Activated T-helper 2 cell treated with anti-CD3 and anti-CD28 coated beads, Interferon-gamma antibody, Interleukin-2, Interleukin-4, amounts not matched to agents 10 μg/mL and 5 μg/mL and 100 μg/mL, durations not matched to agents 14 hours and 24 hours and 36 hours (primary cell): ENCODE measurements at regions of chr17 and their contacts with region 1.

Region 1: GRCh38 chr17:3723556-3724369 is at the start of gene HASPIN:
- DNase-seq: peak; percentile 91
- H3K4me3 Mint-ChIP-seq: peak within 1 kb of the TSS; percentile 95
- H3K27ac Mint-ChIP-seq: peak within 1 kb of the TSS; percentile 84
- H3K4me1 Mint-ChIP-seq: peaks cover 51% of the 10 kb centered on the region
- H3K27me3 Mint-ChIP-seq: no peaks in the 10 kb centered on the region
- total RNA-seq, gene HASPIN: 23.0 and 23.4 TPM in 2 replicates

Region 2: DNA sequence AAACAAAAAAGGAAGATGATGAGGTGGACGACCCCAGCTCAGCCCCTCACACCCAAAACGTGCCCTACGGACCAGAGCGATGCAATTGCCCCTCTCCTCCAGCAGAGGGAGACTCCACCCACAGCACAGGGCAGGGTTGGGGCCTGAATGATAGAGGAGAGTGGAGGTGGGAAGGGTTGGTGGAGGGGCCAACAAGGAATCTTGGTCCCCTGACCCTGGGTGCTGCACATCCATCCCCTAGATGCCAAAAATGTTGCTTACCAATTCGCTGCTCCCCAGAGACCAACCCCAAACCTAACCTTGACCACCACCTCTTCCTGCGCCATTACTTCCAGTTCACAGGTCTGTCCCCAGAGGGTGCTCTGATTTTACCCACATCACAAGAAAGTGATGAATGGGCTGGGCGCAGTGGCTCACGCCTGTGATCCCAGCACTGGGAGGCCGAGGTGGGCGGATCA is 40.7 kb before region 1 on chr17:
- intact Hi-C with region 1: loop called (anchors 5 kb)
- DNase-seq: peak; percentile 43
- H3K4me3 Mint-ChIP-seq: no peak overlapping the region
- H3K27ac Mint-ChIP-seq: peak overlapping the region; percentile 49
- H3K4me1 Mint-ChIP-seq: peaks cover 6% of the 10 kb centered on the region
- H3K27me3 Mint-ChIP-seq: no peaks in the 10 kb centered on the region

Region 3: DNA sequence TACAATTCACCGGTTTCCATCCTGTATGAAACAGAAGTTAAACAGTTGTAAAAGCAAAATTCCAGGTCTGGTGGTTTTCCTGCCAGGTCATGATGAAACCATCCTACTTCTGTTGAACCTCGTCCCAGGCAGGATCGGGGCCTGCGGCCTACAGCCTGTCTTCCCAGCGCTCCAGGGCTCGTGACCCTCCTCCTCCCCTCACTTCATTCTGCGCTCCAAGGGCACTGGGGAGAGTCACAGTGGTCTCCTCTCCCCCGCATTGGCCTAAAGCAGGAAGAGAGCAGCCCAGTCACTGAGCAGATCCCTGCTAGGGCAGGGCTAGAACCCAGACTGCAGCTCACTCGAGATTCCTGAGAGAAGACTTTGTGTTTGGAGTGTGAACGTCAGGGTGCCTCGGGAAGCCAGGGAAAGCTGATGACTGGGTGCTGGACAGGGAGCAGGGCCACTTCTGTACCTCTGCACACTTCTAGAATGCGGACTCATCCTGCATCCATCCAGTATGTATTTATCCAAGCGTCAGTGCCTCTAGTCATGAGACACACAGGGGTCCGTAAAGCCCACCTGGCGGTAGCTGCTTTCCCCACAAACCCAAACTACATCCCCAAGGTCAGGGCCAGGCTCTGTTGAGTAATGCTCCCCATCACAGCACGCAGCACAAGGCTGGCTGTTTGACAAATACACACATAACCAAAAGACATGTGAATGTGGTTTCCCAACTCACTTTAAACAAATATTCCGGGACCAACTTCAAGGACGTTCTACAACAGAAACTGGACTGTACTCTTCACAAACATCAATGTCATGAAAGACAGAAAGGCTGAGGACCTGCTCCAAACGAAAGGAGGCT is 78.9 kb after region 1 on chr17:
- intact Hi-C with region 1: no loop called
- DNase-seq: no peak
- H3K4me3 Mint-ChIP-seq: no peak overlapping the region
- H3K27ac Mint-ChIP-seq: peak overlapping the region; percentile 67
- H3K4me1 Mint-ChIP-seq: peaks cover 35% of the 10 kb centered on the region
- H3K27me3 Mint-ChIP-seq: no peaks in the 10 kb centered on the region